Caco-2 (cell line): ENCODE measurements at regions of chr17 and their contacts with region 1.

Region 1: DNA sequence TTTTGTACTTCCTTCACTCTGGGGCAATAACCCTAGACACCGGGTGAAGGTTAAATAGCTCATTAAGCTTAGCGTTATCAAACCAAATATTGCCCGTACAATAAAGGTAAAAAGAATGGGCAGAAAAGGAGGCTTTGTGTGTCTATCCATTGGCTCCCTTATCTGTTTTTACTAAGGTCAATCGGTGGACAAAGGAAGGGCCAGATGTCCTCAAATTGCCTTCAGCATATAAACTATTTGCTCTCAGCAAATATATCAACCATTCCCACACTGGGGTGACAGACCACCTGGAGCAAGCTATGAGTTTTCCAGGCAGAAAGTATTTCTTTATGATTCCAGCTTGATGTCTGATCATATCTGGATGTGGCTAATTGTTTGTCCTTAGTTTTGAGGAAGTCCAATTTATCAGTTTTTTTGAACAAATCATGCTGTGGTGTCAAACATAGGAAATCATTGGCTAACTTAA is 25.3 kb upstream of the WIPI1 start:
- DNase-seq: peak; percentile 61 to 62
- H3K4me3 ChIP-seq: no peak overlapping the region
- H3K4me3 Mint-ChIP-seq: no peak overlapping the region
- H3K27ac Mint-ChIP-seq: no peak overlapping the region
- H3K4me1 ChIP-seq: peaks cover 17% of the 10 kb centered on the region
- H3K4me1 Mint-ChIP-seq: peaks cover 8% of the 10 kb centered on the region
- H3K27me3 ChIP-seq: no peaks in the 10 kb centered on the region
- H3K27me3 Mint-ChIP-seq: no peaks in the 10 kb centered on the region
- CTCF ChIP-seq: no peak

Region 2: GRCh38 chr17:68512247-68512982 is 29.8 kb after region 1 on chr17 and contains the start of gene PRKAR1A:
- CTCF ChIA-PET with region 1: interaction called, 3 read pairs
- POLR2A ChIA-PET with region 1: interaction called, 4 read pairs
- intact Hi-C with region 1: loop called (anchors 2 kb)
- DNase-seq: peak; percentile 93
- H3K4me3 ChIP-seq: peak within 1 kb of the TSS; percentile 77
- H3K4me3 Mint-ChIP-seq: peak within 1 kb of the TSS; percentile 93
- H3K27ac Mint-ChIP-seq: peak within 1 kb of the TSS; percentile 97
- H3K4me1 ChIP-seq: peaks cover 15% of the 10 kb centered on the region
- H3K4me1 Mint-ChIP-seq: peaks cover 10% of the 10 kb centered on the region
- H3K27me3 ChIP-seq: no peaks in the 10 kb centered on the region
- H3K27me3 Mint-ChIP-seq: no peaks in the 10 kb centered on the region
- CTCF ChIP-seq: no peak
- total RNA-seq, gene PRKAR1A: 160 and 170 TPM in 2 replicates

Region 3: DNA sequence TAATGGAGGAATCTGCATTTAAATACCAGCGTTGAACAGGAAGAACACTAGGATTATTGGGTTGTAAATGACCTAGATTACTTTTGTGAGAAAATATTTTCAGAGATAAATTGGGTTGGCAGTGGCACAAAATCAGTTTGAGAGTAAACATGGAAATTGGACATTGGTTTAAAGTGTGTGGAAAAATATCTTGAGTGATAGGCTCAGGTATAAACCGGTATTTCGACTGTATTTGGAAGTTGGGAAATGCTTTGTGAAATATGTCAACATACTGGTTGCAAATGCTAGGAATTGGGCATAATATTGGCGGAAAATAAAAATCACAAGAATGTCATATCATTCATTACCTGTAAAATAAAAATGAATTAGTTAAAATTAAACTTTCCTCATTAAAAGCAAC is 44.7 kb after region 1 on chr17:
- CTCF ChIA-PET with region 1: no interaction called
- POLR2A ChIA-PET with region 1: no interaction called
- intact Hi-C with region 1: no loop called
- DNase-seq: no peak
- H3K4me3 ChIP-seq: no peak overlapping the region
- H3K4me3 Mint-ChIP-seq: no peak overlapping the region
- H3K27ac Mint-ChIP-seq: no peak overlapping the region
- H3K4me1 ChIP-seq: no peaks in the 10 kb centered on the region
- H3K4me1 Mint-ChIP-seq: no peaks in the 10 kb centered on the region
- H3K27me3 ChIP-seq: no peaks in the 10 kb centered on the region
- H3K27me3 Mint-ChIP-seq: no peaks in the 10 kb centered on the region
- CTCF ChIP-seq: no peak

Region 4: DNA sequence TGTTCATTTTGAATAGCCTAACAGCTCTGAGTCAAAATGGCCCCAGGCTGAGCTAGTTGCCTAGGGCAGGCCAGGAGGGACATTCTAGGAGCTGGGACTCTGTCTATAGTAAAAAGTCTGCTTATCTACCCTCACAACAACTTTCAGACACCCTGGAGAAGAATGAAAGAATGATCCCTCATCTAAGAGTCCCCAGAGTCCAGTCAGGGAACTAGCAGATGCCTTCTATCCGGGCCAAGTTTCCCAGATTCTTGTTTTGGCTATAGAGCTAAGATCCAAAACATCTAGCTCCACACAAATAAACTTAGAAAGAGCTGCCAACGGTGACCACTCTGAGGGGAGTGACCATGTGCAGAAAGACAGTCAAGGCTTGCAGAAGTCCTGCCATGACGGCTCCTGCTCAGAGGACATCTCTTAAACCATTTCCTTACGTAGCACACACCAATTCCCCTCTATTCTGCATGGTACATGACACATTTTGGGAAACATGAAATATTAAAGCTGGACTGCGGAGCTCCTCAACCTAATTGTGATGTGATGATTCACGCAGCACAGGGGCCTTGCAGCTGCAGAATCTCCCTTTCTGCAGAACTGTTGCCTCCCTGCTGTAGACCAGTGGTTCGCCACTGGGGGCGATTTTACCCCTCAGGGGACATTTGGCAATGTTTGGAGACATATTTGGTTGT is 94.3 kb after region 1 on chr17:
- CTCF ChIA-PET with region 1: no interaction called
- POLR2A ChIA-PET with region 1: no interaction called
- intact Hi-C with region 1: no loop called
- DNase-seq: no peak
- H3K4me3 ChIP-seq: no peak overlapping the region
- H3K4me3 Mint-ChIP-seq: no peak overlapping the region
- H3K27ac Mint-ChIP-seq: no peak overlapping the region
- H3K4me1 ChIP-seq: no peaks in the 10 kb centered on the region
- H3K4me1 Mint-ChIP-seq: no peaks in the 10 kb centered on the region
- H3K27me3 ChIP-seq: no peaks in the 10 kb centered on the region
- H3K27me3 Mint-ChIP-seq: no peaks in the 10 kb centered on the region
- CTCF ChIP-seq: no peak